Caco-2 (cell line): ENCODE measurements at regions of chr12 and their contacts with region 1.

Region 1: GRCh38 chr12:60684988-60685655 is 1089.3 kb downstream of the SLC16A7 start:
- DNase-seq: peak in 1 of 2 experiments; percentile 7
- H3K4me3 ChIP-seq: no peak overlapping the region
- H3K4me3 Mint-ChIP-seq: no peak overlapping the region
- H3K27ac Mint-ChIP-seq: no peak overlapping the region
- H3K4me1 ChIP-seq: no peaks in the 10 kb centered on the region
- H3K4me1 Mint-ChIP-seq: no peaks in the 10 kb centered on the region
- H3K27me3 ChIP-seq: no peaks in the 10 kb centered on the region
- H3K27me3 Mint-ChIP-seq: no peaks in the 10 kb centered on the region
- CTCF ChIP-seq: peak in 1 of 2 experiments; percentile 50

Region 2: DNA sequence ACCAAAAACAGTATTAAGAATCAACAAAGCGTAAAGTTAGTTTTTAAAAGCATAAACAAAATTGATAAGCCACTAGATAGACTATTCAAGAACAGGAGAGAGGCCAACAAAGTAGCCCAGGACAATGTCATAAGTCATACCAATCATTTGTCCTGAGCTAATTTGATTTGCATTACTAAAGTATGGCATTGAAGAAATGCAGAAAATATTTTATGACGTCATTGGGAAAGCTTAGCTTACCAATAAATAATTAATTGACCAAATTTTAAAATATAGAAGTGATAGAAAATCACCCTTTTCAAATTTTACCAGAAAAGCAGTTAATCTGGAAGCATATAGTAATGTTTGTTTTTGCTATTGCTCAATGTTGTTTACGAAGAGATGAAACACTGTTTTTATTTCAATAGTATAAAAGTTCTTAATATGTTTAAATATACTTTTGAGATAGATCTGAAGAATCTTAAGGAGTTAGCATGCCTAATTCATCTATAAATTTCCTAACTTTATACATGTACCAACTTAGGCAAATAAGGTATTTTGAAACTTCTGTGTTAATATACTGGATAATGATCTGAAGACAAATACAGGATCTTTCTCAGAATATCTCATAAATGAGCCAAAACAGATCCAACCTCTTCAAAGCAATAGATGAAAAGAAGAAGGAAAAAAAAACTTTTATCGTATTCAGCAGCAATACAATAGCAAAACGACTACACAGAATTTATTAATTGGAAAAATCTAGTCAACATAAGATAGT is 29.2 kb after region 1 on chr12:
- CTCF ChIA-PET with region 1: no interaction called
- POLR2A ChIA-PET with region 1: no interaction called
- intact Hi-C with region 1: loop called (anchors 2 kb)
- DNase-seq: no peak
- H3K4me3 ChIP-seq: no peak overlapping the region
- H3K4me3 Mint-ChIP-seq: no peak overlapping the region
- H3K27ac Mint-ChIP-seq: no peak overlapping the region
- H3K4me1 ChIP-seq: no peaks in the 10 kb centered on the region
- H3K4me1 Mint-ChIP-seq: no peaks in the 10 kb centered on the region
- H3K27me3 ChIP-seq: no peaks in the 10 kb centered on the region
- H3K27me3 Mint-ChIP-seq: no peaks in the 10 kb centered on the region
- CTCF ChIP-seq: no peak

Region 3: GRCh38 chr12:60977966-60978365 is 292.8 kb after region 1 on chr12:
- CTCF ChIA-PET with region 1: no interaction called
- POLR2A ChIA-PET with region 1: no interaction called
- intact Hi-C with region 1: loop called (anchors 1 kb)
- DNase-seq: peak in 1 of 2 experiments; percentile 15
- H3K4me3 ChIP-seq: no peak overlapping the region
- H3K4me3 Mint-ChIP-seq: no peak overlapping the region
- H3K27ac Mint-ChIP-seq: no peak overlapping the region
- H3K4me1 ChIP-seq: no peaks in the 10 kb centered on the region
- H3K4me1 Mint-ChIP-seq: no peaks in the 10 kb centered on the region
- H3K27me3 ChIP-seq: no peaks in the 10 kb centered on the region
- H3K27me3 Mint-ChIP-seq: no peaks in the 10 kb centered on the region
- CTCF ChIP-seq: peak; percentile 23 to 54

Region 4: GRCh38 chr12:61993734-61994345 is 1308.7 kb after region 1 on chr12:
- CTCF ChIA-PET with region 1: no interaction called
- POLR2A ChIA-PET with region 1: no interaction called
- intact Hi-C with region 1: loop called (anchors 5 kb)
- DNase-seq: peak in 1 of 2 experiments; percentile 47
- H3K4me3 ChIP-seq: no peak overlapping the region
- H3K4me3 Mint-ChIP-seq: no peak overlapping the region
- H3K27ac Mint-ChIP-seq: no peak overlapping the region
- H3K4me1 ChIP-seq: no peaks in the 10 kb centered on the region
- H3K4me1 Mint-ChIP-seq: no peaks in the 10 kb centered on the region
- H3K27me3 ChIP-seq: no peaks in the 10 kb centered on the region; the same call in 1 of the 2 replicates
- H3K27me3 Mint-ChIP-seq: peaks cover 5% of the 10 kb centered on the region
- CTCF ChIP-seq: peak; percentile 61 to 79